Activated B cell treated with CpG ODN at 0.5 μM for 24 hours (primary cell): ENCODE measurements at regions of chr19 and their contacts with region 1.

Region 1: DNA sequence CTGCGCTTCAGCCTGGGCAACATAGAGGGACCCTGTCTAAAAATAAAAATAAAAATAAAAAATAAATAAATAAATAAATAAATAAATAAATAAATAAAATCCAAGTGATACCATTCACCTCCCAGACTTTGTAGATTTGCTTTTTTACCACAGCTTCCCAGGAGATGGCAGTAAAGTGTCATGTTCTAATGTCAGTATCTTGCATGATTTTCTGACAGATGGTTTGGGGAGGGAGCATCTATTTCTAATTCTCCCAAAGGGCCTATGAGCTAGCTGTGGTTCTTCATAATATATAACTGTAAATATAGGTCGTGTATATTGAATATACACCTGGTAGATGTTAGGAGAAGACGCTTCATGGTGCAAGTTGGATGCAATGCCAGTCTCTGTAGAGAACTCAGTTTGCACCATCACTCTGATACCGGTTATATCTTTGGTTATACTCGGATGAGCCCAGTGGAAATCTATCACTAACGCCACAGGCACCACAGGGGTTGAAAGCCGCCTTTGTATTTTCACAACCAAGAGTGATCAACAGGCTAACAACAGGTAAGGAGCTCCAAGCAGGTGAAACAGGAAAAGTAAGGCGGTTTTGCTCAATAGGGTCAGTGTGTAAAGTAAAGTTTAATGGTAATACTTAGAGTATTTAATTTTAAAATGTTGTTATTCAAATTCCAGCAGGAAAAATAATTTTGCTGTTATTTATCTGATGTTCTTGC is 13.9 kb downstream of the APLP1 start:
- DNase-seq: no peak
- ATAC-seq: peak; percentile 69
- H3K4me3 Mint-ChIP-seq: no peak overlapping the region
- H3K27ac Mint-ChIP-seq: peak overlapping the region; percentile 38
- H3K4me1 Mint-ChIP-seq: peaks cover 6% of the 10 kb centered on the region
- H3K27me3 Mint-ChIP-seq: peaks cover 20% of the 10 kb centered on the region
- CTCF ChIP-seq: no peak

Region 2: DNA sequence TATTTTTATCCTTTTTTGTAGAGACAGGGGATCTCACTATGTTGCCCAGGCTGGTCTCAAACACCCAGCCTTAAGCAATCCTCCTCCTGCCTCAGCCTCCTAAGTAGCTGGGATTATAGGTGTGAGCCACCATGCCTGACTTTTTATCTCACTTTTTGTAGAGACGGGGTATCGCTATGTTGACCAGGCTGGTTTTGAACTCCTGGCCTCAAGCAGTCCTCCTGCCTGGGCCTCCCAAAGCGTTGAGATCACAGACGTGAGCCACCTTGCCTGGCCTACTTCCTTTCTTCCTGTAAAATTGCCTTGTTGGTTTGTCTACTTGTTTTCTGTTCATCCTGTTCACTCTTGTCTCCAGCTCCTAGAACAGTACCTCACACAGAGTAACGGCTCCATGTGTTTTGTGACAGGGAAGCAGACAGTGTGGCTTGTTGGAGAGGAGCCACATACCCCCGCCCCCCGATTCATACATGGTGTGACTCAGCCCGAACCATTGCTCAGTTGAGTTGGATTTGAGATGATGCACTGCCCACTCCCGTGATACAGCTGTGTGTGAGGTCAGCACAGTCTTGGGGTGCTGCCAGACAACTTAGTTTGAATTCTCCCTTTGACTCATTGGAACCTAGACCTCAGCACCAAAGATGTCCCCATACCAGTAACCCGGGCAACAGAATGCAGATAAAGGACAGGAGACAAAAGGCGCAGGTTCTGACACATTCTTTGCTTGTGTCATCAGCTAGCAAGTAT is 477.2 kb before region 1 on chr19:
- CTCF ChIA-PET with region 1: no interaction called
- POLR2A ChIA-PET with region 1: no interaction called
- intact Hi-C with region 1: no loop called
- DNase-seq: no peak
- ATAC-seq: no peak
- H3K4me3 Mint-ChIP-seq: no peak overlapping the region
- H3K27ac Mint-ChIP-seq: no peak overlapping the region
- H3K4me1 Mint-ChIP-seq: peaks cover 17% of the 10 kb centered on the region
- H3K27me3 Mint-ChIP-seq: no peaks in the 10 kb centered on the region
- CTCF ChIP-seq: no peak

Region 3: DNA sequence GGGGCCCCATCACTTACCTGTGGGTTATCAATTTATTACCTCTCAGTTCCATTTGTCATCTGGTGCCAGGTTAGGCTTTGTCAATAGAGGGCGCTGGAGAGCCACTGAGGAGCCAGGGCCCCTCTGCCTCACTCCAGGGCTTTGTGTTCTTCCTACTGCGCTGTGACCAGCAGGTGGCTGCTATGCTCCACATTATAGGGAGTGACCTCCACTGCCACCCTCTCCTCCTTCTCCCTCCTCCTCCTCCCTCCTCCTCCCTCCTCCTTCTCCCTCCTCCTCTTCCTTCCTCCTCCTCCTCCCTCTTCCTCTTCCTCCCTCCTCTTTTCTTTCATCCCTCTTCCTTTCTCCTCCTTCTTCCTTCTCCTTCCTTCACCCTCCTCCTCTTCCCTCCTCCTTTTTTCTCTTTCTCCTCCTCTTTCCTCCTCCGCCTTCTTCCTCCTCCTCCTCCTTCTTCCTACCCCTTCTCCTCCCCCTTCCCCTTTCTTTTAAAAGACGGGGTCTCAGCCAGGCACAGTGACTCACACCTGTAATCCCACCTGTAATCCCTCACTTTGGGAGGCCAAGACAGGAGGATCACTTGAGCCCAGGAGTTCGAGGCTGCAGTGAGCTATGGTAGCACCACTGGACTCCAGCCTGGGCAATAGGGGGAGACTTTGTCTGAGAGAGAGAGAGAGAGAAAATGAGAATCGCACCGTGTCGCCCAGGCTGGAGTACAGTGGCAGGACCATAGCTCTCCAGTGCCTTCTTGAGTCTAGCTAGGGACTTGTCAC is 188.3 kb before region 1 on chr19:
- CTCF ChIA-PET with region 1: interaction called, 5 read pairs
- POLR2A ChIA-PET with region 1: no interaction called
- intact Hi-C with region 1: loop called (anchors 1 kb)
- DNase-seq: peak; percentile 76
- ATAC-seq: peak; percentile 100
- H3K4me3 Mint-ChIP-seq: no peak overlapping the region
- H3K27ac Mint-ChIP-seq: no peak overlapping the region
- H3K4me1 Mint-ChIP-seq: peaks cover 3% of the 10 kb centered on the region
- H3K27me3 Mint-ChIP-seq: peaks cover 4% of the 10 kb centered on the region
- CTCF ChIP-seq: no peak

Region 4: DNA sequence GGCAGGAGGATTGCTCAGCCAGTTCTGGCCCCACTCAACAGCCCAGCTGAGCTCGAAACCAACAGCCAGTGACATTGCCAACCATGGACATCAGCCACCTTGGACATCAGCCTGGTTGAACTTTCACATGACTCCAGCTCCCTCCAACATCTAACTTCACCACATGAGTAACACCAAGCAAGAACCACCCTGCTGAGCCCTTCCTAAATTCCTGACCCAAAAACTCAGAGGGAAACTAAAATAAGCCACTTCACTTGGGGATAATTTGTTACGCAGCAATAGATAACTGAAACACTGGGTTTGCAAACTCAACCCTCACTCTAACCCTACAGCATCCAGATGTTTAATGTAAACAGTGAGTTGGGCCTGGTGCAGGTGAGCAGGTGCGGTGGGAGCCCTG is 43.2 kb after region 1 on chr19:
- CTCF ChIA-PET with region 1: interaction called, 81 read pairs
- POLR2A ChIA-PET with region 1: interaction called, 60 read pairs
- intact Hi-C with region 1: no loop called
- DNase-seq: no peak
- ATAC-seq: no peak
- H3K4me3 Mint-ChIP-seq: no peak overlapping the region
- H3K27ac Mint-ChIP-seq: no peak overlapping the region
- H3K4me1 Mint-ChIP-seq: peaks cover 34% of the 10 kb centered on the region
- H3K27me3 Mint-ChIP-seq: no peaks in the 10 kb centered on the region
- CTCF ChIP-seq: no peak